Activated naive CD4-positive, alpha-beta T cell treated with anti-CD3 and anti-CD28 coated beads for 36 hours (primary cell): ENCODE measurements at regions of chr20 and their contacts with region 1.

Region 1: GRCh38 chr20:58650776-58651558 is at the start of gene STX16:
- DNase-seq: peak; percentile 93
- H3K4me3 Mint-ChIP-seq: peak within 1 kb of the TSS; percentile 95
- H3K27ac Mint-ChIP-seq: peak within 1 kb of the TSS; percentile 99
- H3K4me1 Mint-ChIP-seq: peaks cover 17% of the 10 kb centered on the region
- H3K27me3 Mint-ChIP-seq: no peaks in the 10 kb centered on the region
- total RNA-seq, gene STX16: 127 TPM

Region 2: GRCh38 chr20:57398231-57398821 is 1252.6 kb before region 1 on chr20:
- CTCF ChIA-PET with region 1: no interaction called
- intact Hi-C with region 1: loop called (anchors 5 kb)
- DNase-seq: peak; percentile 91
- H3K4me3 Mint-ChIP-seq: peak overlapping the region; percentile 80
- H3K27ac Mint-ChIP-seq: peak overlapping the region; percentile 99
- H3K4me1 Mint-ChIP-seq: peaks cover 93% of the 10 kb centered on the region
- H3K27me3 Mint-ChIP-seq: no peaks in the 10 kb centered on the region

Region 3: GRCh38 chr20:58236612-58237330 is 414.2 kb before region 1 on chr20:
- CTCF ChIA-PET with region 1: interaction called, 3 read pairs
- intact Hi-C with region 1: loop called (anchors 1 kb)
- DNase-seq: peak; percentile 91
- H3K4me3 Mint-ChIP-seq: peak overlapping the region; percentile 83
- H3K27ac Mint-ChIP-seq: peak overlapping the region; percentile 88
- H3K4me1 Mint-ChIP-seq: peaks cover 23% of the 10 kb centered on the region
- H3K27me3 Mint-ChIP-seq: no peaks in the 10 kb centered on the region

Region 4: GRCh38 chr20:58407966-58408557 is 242.9 kb before region 1 on chr20:
- CTCF ChIA-PET with region 1: interaction called, 4 read pairs
- intact Hi-C with region 1: loop called (anchors 5 kb)
- DNase-seq: peak; percentile 63
- H3K4me3 Mint-ChIP-seq: peak overlapping the region; percentile 7
- H3K27ac Mint-ChIP-seq: peak overlapping the region; percentile 81
- H3K4me1 Mint-ChIP-seq: peaks cover 30% of the 10 kb centered on the region
- H3K27me3 Mint-ChIP-seq: no peaks in the 10 kb centered on the region

Region 5: GRCh38 chr20:58692594-58693226 is 41.7 kb after region 1 on chr20 and contains the start of gene NPEPL1:
- CTCF ChIA-PET with region 1: interaction called, 9 read pairs
- intact Hi-C with region 1: loop called (anchors 1 kb)
- DNase-seq: peak; percentile 64
- H3K4me3 Mint-ChIP-seq: peak within 1 kb of the TSS; percentile 72
- H3K27ac Mint-ChIP-seq: peak within 1 kb of the TSS; percentile 52
- H3K4me1 Mint-ChIP-seq: peaks cover 9% of the 10 kb centered on the region
- H3K27me3 Mint-ChIP-seq: no peaks in the 10 kb centered on the region
- total RNA-seq, gene NPEPL1: 14.3 to 14.5 TPM

Region 6: GRCh38 chr20:58807801-58808200 is 156.8 kb after region 1 on chr20:
- CTCF ChIA-PET with region 1: no interaction called
- intact Hi-C with region 1: no loop called
- DNase-seq: no peak
- H3K4me3 Mint-ChIP-seq: no peak overlapping the region
- H3K27ac Mint-ChIP-seq: no peak overlapping the region
- H3K4me1 Mint-ChIP-seq: no peaks in the 10 kb centered on the region
- H3K27me3 Mint-ChIP-seq: peaks cover 2% of the 10 kb centered on the region

Region 7: GRCh38 chr20:58888521-58889333 is 237.8 kb after region 1 on chr20:
- CTCF ChIA-PET with region 1: interaction called, 7 read pairs
- intact Hi-C with region 1: loop called (anchors 2 kb)
- DNase-seq: peak; percentile 89
- H3K4me3 Mint-ChIP-seq: peak overlapping the region; percentile 84
- H3K27ac Mint-ChIP-seq: no peak overlapping the region
- H3K4me1 Mint-ChIP-seq: peaks cover 27% of the 10 kb centered on the region
- H3K27me3 Mint-ChIP-seq: no peaks in the 10 kb centered on the region

Region 8: DNA sequence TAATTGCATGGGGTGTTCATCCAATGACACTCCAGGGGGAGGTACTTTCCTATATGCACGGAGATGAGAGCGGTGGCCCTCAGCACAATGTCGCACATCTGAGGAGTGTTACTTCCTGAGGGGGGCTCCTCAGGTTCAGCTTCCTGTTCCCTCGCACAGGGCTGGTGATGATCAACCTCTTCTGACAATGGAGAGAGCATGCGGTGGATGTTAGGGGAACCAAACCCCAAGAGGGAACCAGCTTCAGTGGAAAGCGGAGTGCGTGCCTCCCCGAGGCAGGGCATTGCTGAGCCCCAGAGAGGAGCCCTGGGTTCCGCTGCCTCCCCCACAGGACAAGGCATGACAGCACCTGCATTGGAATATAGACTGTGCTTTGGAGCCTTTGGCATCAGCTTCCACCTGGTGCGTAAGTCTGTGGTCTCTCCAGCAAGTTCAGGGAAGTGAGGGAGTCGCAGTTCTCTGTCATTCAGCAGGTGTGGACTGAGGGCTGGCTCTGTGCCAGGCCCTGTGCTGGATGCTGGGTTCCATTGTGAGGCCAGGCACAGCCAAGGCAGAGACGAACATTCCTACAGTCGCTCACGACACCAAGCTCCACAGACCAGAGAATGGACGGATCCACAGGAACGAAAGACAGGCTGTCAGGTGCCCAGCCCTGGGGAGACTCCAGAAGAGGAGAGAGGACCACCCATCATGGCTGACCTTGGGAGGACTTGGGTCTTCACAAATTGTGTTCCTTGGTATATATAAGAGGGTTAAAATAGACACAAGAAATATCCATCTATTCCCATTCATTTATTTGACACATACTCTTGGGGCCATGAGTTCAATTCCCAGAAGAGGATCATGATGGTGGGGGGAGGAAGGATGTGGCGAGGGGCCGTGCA is 508.8 kb after region 1 on chr20:
- CTCF ChIA-PET with region 1: no interaction called
- intact Hi-C with region 1: loop called (anchors 5 kb)
- DNase-seq: peak; percentile 87
- H3K4me3 Mint-ChIP-seq: peak overlapping the region; percentile 90
- H3K27ac Mint-ChIP-seq: peak overlapping the region; percentile 94
- H3K4me1 Mint-ChIP-seq: peaks cover 80% of the 10 kb centered on the region
- H3K27me3 Mint-ChIP-seq: no peaks in the 10 kb centered on the region